ENCODE measurements at regions of chr14 and their contacts with region 1.

Region 1: DNA sequence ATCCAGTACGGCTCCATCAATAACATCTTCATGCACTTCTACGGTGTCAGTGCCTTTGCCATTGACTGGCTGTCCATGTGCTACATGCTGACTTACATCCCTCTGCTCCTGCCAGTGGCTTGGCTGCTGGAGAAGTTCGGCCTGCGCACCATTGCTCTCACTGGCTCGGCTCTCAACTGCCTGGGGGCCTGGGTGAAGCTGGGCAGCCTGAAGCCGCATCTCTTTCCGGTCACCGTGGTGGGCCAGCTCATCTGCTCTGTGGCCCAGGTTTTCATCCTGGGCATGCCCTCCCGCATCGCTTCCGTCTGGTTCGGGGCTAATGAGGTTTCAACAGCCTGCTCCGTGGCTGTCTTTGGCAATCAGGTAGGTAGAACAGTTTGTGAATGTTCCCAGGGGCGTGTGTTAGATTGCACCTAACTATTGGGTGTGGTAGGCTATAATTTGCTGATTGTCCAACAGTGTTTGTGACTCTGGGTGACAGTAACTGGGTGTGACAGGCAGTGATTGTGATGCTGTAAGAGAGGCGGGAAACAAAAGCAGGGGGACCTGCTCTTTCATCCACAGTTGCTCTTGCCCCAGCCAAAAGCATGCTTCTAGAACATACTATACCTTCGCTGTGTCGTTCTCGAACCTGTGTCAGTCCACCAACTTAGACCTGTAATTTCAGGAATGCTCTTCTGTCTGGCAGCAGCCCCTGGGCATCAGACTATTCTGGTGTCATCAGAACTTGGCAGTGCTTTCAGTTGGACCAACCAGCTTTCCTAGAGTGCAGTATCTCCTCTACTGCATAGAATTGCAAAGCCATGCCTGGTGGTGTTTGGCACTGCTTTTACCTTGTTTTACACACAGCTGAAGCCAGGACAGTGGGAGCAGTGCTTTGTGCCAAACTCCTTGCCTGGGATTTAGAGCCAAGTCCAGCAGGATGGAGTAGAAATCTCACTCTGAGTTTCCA is 1.1 kb downstream of the FLVCR2 start:
- DNase-seq: peak; percentile 30 to 46
- H3K4me3 ChIP-seq: peak overlapping the region in 2 of 3 donors; percentile 36 to 52
- H3K27ac ChIP-seq: peak overlapping the region in 2 of 3 donors; percentile 88 to 91
- H3K4me1 ChIP-seq: peaks cover 19 to 27% of the 10 kb centered on the region in 2 donors
- H3K27me3 ChIP-seq: no peaks in the 10 kb centered on the region
- CTCF ChIP-seq: no peak
- POLR2A ChIP-seq: no peak

Region 2: DNA sequence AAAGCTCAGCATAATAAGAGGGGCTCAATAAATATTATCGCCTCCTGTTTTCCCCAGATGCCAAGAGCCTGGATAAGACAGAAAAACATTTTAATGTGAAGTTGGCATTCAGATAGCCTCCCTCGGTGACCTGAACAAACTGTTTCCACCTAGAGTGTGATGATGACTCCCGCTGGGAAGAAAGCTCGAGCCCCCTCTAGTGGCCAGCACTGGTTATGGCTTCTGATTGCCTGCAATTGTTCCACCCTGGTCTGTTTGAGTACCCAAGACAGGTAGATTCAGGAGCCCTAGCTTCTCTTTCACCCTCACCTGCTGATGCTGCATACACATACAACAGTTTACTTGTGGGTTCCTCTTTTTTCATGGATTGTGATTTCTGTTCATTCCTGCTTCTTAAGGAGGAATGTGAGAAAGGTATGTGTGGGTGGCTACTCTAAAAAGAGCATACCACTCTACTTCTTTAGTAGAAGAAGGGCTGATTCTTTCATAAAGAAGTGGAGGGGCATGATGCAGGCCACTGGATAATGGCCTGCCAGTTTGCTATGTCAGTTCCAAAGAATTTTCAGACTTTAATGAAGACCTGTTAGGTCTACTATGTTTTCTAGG is 74.7 kb after region 1 on chr14:
- intact Hi-C with region 1: loop called (anchors 2 kb)
- DNase-seq: peak; percentile 85 to 90
- H3K4me3 ChIP-seq: no peak overlapping the region
- H3K27ac ChIP-seq: no peak overlapping the region
- H3K4me1 ChIP-seq: peaks cover 13 to 26% of the 10 kb centered on the region in 2 donors
- H3K27me3 ChIP-seq: no peaks in the 10 kb centered on the region
- CTCF ChIP-seq: peak; percentile 88 to 98 (median 94)
- POLR2A ChIP-seq: no peak

Region 3: GRCh38 chr14:75831458-75831857 is 251.9 kb after region 1 on chr14:
- intact Hi-C with region 1: no loop called
- DNase-seq: peak; percentile 43 to 45
- H3K4me3 ChIP-seq: no peak overlapping the region
- H3K27ac ChIP-seq: no peak overlapping the region
- H3K4me1 ChIP-seq: peaks cover 0 to 10% of the 10 kb centered on the region in 2 donors
- H3K27me3 ChIP-seq: no peaks in the 10 kb centered on the region
- CTCF ChIP-seq: no peak
- POLR2A ChIP-seq: no peak

Measured in thyroid gland (tissue), 4 donors.